ENCODE measurements at regions of chr2 and their contacts with region 1.

Region 1: DNA sequence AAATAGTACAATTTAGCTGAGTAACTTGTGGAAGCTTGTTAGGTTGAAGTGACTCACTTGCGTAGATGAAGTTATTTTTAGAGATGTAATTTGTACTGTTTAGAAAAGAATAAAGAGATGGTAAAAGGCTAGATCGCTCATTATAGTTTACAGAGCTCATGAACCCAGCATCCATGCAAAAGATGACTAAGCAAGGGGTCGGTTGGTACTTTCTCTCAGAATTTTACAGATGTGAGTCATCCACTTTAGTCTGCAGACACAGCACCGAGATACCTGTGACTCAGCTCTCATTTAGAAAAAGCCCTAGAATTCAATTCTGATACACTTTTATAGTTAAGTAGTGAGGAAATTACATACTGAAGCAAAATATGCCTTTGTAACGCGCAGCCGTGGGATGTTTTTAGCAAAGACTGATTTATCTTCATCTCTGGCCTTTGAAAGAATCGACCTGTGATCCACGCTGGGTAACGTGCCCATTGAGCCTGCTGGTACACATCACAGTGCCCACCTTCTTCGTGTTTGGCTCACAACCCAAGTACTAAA is 116.5 kb upstream of the FOSL2 start:
- DNase-seq: peak; percentile 96
- H3K4me3 ChIP-seq: no peak overlapping the region
- H3K27ac ChIP-seq: peak overlapping the region; percentile 98
- H3K4me1 ChIP-seq: peaks cover 29% of the 10 kb centered on the region
- H3K27me3 ChIP-seq: no peaks in the 10 kb centered on the region
- CTCF ChIP-seq: no peak
- POLR2A ChIP-seq: no peak

Region 2: DNA sequence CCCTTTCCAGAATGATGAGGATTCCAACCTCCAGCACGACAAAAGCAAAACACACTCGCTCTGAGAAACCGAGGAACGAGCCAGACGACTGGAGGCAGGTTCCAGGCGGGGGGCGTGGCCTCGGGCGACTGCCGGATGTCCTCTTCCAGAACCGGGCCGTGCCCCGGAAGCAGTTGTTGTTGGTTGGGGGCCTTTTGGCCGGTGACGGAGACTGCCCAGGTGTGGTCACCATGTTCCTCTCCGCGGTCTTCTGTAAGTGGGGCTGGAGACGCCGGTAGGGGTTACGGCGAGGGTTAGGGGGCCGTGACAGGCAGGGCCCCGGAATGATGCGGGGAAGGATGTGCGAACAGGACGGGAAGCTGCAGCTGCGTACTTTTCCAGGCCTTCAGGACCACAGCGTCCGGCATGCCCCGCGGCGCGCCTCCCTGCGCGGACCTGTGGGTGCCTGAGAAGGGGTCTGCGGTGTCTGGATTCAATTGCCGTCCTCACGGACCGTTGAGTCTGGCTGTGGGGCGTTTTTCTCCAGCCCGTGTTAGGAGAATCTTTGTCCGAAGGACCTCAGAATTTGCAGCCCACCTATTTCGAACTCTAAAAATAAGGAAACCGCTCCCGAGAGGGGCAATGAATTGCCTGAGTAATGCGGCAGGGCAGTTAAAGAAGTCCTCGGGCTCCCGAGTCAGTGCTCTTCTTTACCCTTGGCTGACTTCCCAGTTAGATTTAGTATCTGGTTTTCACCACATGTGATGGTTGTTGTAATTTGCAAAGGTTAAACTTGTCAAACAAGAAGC is 504.4 kb before region 1 on chr2 and contains the start of gene MRPL33:
- CTCF ChIA-PET with region 1: no interaction called
- POLR2A ChIA-PET with region 1: no interaction called
- dilution Hi-C with region 1: no loop called
- intact Hi-C with region 1: loop called (anchors 10 kb)
- DNase-seq: peak; percentile 93
- H3K4me3 ChIP-seq: peak within 1 kb of the TSS; percentile 91 to 95 (median 95)
- H3K27ac ChIP-seq: peak within 1 kb of the TSS; percentile 90
- H3K4me1 ChIP-seq: peaks cover 25% of the 10 kb centered on the region
- H3K27me3 ChIP-seq: no peaks in the 10 kb centered on the region
- CTCF ChIP-seq: no peak
- POLR2A ChIP-seq: peak; percentile 90
- total RNA-seq, gene MRPL33: 96.7 and 97.4 TPM in 2 replicates

Region 3: DNA sequence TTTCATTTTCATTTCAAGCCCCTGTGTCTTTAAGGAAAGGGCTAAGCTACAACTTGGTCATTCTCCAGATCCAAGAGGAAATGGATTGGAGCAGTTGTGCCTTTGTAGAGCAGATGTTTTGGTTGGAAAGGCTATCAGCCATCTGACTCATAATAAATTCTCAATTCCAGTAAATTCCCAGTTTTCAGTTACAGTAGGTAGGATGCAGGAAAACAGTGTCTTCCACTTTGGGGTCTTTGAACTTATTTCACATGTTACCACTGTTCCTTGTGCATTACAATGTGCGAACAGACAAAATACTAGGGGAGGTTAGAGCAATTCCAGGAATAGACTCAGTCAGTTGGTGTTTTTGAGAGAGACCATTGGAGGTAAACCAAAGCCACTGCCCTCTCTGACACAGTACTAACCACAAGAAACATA is 173.7 kb before region 1 on chr2:
- CTCF ChIA-PET with region 1: interaction called, 4 read pairs
- POLR2A ChIA-PET with region 1: no interaction called
- dilution Hi-C with region 1: no loop called
- intact Hi-C with region 1: loop called (anchors 2 kb)
- DNase-seq: peak; percentile 91
- H3K4me3 ChIP-seq: peak overlapping the region in 1 of 3 experiments; percentile 29
- H3K27ac ChIP-seq: peak overlapping the region; percentile 63
- H3K4me1 ChIP-seq: peaks cover 23% of the 10 kb centered on the region
- H3K27me3 ChIP-seq: no peaks in the 10 kb centered on the region
- CTCF ChIP-seq: no peak
- POLR2A ChIP-seq: peak; percentile 48

Region 4: DNA sequence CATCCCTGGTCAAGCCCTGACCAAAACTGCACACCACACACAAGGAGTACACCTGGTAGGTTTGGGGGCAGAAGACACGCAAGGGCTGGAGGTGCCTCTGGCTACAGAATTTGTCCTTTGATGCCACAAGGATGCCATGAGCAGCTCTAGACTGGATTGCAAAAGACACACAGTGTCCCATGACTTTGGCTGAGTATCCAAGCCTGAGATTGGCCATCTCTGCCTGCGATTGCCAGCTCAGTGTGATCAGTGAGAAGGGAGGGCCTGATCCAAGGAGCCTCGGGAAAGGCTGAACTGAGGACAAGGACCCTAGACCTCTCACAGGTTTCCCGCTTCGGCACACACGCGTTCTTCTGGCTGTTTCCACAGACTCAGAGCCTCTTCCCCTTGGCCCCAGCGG is 56.5 kb after region 1 on chr2:
- CTCF ChIA-PET with region 1: no interaction called
- POLR2A ChIA-PET with region 1: no interaction called
- dilution Hi-C with region 1: no loop called
- intact Hi-C with region 1: no loop called
- DNase-seq: no peak
- H3K4me3 ChIP-seq: no peak overlapping the region
- H3K27ac ChIP-seq: no peak overlapping the region
- H3K4me1 ChIP-seq: no peaks in the 10 kb centered on the region
- H3K27me3 ChIP-seq: no peaks in the 10 kb centered on the region
- CTCF ChIP-seq: no peak
- POLR2A ChIP-seq: no peak

Region 5: GRCh38 chr2:28356095-28356911 is 80.2 kb after region 1 on chr2:
- CTCF ChIA-PET with region 1: interaction called, 5 read pairs
- POLR2A ChIA-PET with region 1: no interaction called
- dilution Hi-C with region 1: no loop called
- intact Hi-C with region 1: loop called (anchors 1 kb)
- DNase-seq: peak; percentile 89
- H3K4me3 ChIP-seq: no peak overlapping the region
- H3K27ac ChIP-seq: peak overlapping the region; percentile 80
- H3K4me1 ChIP-seq: peaks cover 37% of the 10 kb centered on the region
- H3K27me3 ChIP-seq: no peaks in the 10 kb centered on the region
- CTCF ChIP-seq: no peak
- POLR2A ChIP-seq: no peak